HepG2 (cell line): ENCODE measurements at regions of chr10 and their contacts with region 1.

Region 1: GRCh38 chr10:91908337-91909116 is 759 bp downstream of the FGFBP3 start:
- DNase-seq: peak; percentile 83
- ATAC-seq: peak; percentile 98
- H3K4me3 ChIP-seq: peak overlapping the region; percentile 69 to 80 (median 78)
- H3K27ac ChIP-seq: peak overlapping the region; percentile 61
- H3K4me1 ChIP-seq: peaks cover 37% of the 10 kb centered on the region
- H3K27me3 ChIP-seq: no peaks in the 10 kb centered on the region; a peak in 1 of 5 replicates
- CTCF ChIP-seq: peak; percentile 92
- EP300 ChIP-seq: no peak
- POLR2A ChIP-seq: peak; percentile 72 to 75
- RAD21 ChIP-seq: peak; percentile 57

Region 2: GRCh38 chr10:91298224-91298871 is 610.2 kb before region 1 on chr10:
- CTCF ChIA-PET with region 1: no interaction called
- POLR2A ChIA-PET with region 1: no interaction called
- in situ Hi-C with region 1: no loop called
- intact Hi-C with region 1: loop called (anchors 2 kb)
- DNase-seq: peak; percentile 51
- ATAC-seq: peak; percentile 88
- H3K4me3 ChIP-seq: peak overlapping the region in 1 of 3 experiments; percentile 10; a peak in 1 of 6 replicates
- H3K27ac ChIP-seq: no peak overlapping the region
- H3K4me1 ChIP-seq: peaks cover 16% of the 10 kb centered on the region
- H3K27me3 ChIP-seq: no peaks in the 10 kb centered on the region
- CTCF ChIP-seq: peak; percentile 93
- EP300 ChIP-seq: no peak
- POLR2A ChIP-seq: no peak
- RAD21 ChIP-seq: peak; percentile 89

Region 3: GRCh38 chr10:91758303-91759146 is 150.0 kb before region 1 on chr10:
- CTCF ChIA-PET with region 1: interaction called, 18 read pairs
- POLR2A ChIA-PET with region 1: no interaction called
- in situ Hi-C with region 1: loop called (anchors 5 kb)
- intact Hi-C with region 1: loop called (anchors 1 kb)
- DNase-seq: peak; percentile 72
- ATAC-seq: peak; percentile 71
- H3K4me3 ChIP-seq: no peak overlapping the region
- H3K27ac ChIP-seq: no peak overlapping the region
- H3K4me1 ChIP-seq: no peaks in the 10 kb centered on the region
- H3K27me3 ChIP-seq: no peaks in the 10 kb centered on the region; a peak in 1 of 5 replicates
- CTCF ChIP-seq: peak; percentile 80
- EP300 ChIP-seq: no peak
- POLR2A ChIP-seq: no peak
- RAD21 ChIP-seq: peak; percentile 77

Region 4: DNA sequence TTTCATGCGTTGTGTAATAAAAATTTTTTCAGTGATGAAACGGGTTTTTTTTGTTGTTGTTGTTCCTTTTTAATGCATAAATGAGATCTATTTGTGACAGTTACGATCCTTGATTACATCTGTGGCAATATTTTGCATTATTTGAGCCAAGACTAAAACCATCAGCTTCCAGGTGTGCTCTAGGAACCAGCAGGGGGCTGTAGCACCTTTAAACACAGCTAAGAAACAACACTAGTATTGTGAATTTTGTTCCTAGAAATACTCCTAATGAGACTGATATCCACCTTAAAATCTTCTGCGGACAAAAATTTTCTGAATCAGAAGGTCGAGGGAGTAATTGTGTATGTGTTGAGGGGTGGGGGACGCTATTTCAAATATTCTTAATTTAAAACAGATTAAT is 51.9 kb before region 1 on chr10:
- CTCF ChIA-PET with region 1: interaction called, 19 read pairs
- POLR2A ChIA-PET with region 1: no interaction called
- in situ Hi-C with region 1: no loop called
- intact Hi-C with region 1: loop called (anchors 1 kb)
- DNase-seq: peak; percentile 12
- ATAC-seq: peak; percentile 68
- H3K4me3 ChIP-seq: no peak overlapping the region
- H3K27ac ChIP-seq: no peak overlapping the region
- H3K4me1 ChIP-seq: no peaks in the 10 kb centered on the region
- H3K27me3 ChIP-seq: no peaks in the 10 kb centered on the region
- CTCF ChIP-seq: peak; percentile 51
- EP300 ChIP-seq: no peak
- POLR2A ChIP-seq: no peak
- RAD21 ChIP-seq: no peak; the same call in 1 of the 2 replicates

Region 5: GRCh38 chr10:91923371-91924211 is 15.1 kb after region 1 on chr10 and contains the start of gene BTAF1:
- CTCF ChIA-PET with region 1: interaction called, 3 read pairs
- POLR2A ChIA-PET with region 1: interaction called, 13 read pairs
- in situ Hi-C with region 1: no loop called
- intact Hi-C with region 1: loop called (anchors 2 kb)
- DNase-seq: peak; percentile 85
- ATAC-seq: peak; percentile 97
- H3K4me3 ChIP-seq: peak within 1 kb of the TSS; percentile 68 to 96 (median 76)
- H3K27ac ChIP-seq: peak within 1 kb of the TSS; percentile 86
- H3K4me1 ChIP-seq: peaks cover 56% of the 10 kb centered on the region
- H3K27me3 ChIP-seq: no peaks in the 10 kb centered on the region; a peak in 1 of 5 replicates
- CTCF ChIP-seq: no peak; the same call in 1 of the 2 replicates
- EP300 ChIP-seq: 0 out of 4 replicates have a peak, but pooled peaks of 1 of the 2 experiments have one; percentile 33
- POLR2A ChIP-seq: peak; percentile 93 to 96
- RAD21 ChIP-seq: no peak
- total RNA-seq, gene BTAF1: 31.6 and 38.6 TPM in 2 replicates